PC-9 (cell line): ENCODE measurements at regions of chr20 and their contacts with region 1.

Region 1: DNA sequence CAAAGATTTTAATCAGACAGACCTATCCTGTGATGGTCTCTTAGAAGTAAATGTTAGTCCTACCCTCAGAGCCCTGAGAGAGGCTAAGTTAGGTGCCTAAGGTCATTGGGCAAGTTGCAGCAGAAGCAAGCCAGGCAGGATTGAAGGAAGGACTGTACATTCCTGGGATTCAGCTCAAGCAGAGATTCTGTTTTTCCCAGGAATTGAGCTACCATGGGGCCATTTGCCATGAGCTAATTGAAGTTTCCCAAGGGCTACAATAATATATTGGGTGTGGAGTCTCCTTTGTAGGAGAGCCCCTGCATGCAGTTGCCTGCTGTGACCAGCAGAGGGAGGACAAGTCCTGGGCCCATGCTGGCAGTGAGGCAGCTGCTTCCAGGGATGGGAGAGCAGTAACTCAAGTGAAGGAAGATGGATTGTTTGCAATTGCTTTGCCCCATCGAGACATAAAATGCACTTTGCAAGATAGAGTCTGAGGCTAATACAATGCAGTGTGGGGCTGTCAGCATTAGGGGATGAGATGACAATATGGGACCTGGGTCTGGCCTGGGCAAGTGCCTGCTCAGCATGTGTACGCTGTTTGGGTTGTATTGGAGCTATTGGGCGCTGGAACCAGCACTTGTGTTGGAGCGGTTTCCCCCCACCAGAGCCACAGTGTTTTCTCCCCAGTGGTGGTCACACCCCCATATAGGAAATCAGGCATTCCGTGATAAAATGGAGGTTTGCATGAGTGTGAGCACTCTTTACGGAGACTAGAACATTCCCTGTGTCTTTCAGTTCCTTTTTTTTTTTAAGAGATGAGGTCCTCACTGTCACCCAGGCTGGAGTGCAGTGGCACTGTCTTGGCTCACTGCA is 27.9 kb downstream of the DNMT3B start:
- DNase-seq: peak in 1 of 2 experiments; percentile 67
- H3K4me3 ChIP-seq: no peak overlapping the region
- H3K27ac ChIP-seq: no peak overlapping the region
- H3K4me1 ChIP-seq: no peaks in the 10 kb centered on the region
- H3K27me3 ChIP-seq: no peaks in the 10 kb centered on the region
- CTCF ChIP-seq: peak; percentile 99

Region 2: DNA sequence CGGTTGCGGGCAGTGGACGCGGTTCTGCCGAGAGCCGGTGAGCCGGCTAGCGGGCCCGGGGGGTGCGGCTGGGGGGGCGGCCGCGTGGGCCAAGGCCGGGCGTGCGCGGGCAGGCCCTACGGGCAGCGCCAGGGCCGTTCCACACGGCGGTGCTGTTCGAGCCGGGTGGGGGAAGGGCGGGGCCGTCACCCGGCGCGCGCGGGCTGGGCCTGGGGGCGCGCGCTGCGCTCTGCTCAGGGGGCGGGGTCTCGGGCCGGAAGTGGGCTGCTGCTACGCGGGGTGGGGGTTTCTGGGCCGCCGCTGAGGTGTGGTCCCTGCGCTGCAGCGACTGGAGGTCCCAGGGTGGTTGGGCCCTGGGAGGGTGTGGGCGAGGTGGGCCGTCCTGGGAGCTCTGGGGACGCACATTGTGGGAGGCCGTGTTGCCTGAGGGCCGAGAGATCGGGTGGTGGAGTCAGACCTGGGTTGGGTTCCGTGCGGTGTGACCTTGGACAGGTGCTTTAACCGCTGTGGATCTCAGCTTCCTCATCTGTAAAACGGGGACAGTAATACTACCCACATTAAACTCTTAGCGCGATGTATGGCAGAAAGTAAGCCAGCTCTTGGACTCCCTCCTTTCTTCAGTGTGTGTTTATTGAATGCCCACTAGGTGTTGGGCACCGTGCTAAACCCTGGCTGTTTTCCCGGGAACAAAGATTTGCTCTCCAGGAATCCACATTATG is 30.0 kb after region 1 on chr20:
- CTCF ChIA-PET with region 1: interaction called, 10 read pairs
- POLR2A ChIA-PET with region 1: interaction called, 3 read pairs
- intact Hi-C with region 1: no loop called
- DNase-seq: no peak
- H3K4me3 ChIP-seq: peak overlapping the region; percentile 76
- H3K27ac ChIP-seq: peak overlapping the region; percentile 50; the same call in 1 of the 2 replicates
- H3K4me1 ChIP-seq: peaks cover 34% of the 10 kb centered on the region
- H3K27me3 ChIP-seq: no peaks in the 10 kb centered on the region
- CTCF ChIP-seq: no peak

Region 3: GRCh38 chr20:33009214-33010132 is 219.3 kb after region 1 on chr20:
- CTCF ChIA-PET with region 1: no interaction called
- POLR2A ChIA-PET with region 1: no interaction called
- intact Hi-C with region 1: no loop called
- DNase-seq: no peak
- H3K4me3 ChIP-seq: no peak overlapping the region
- H3K27ac ChIP-seq: no peak overlapping the region
- H3K4me1 ChIP-seq: no peaks in the 10 kb centered on the region
- H3K27me3 ChIP-seq: peaks cover 89% of the 10 kb centered on the region
- CTCF ChIP-seq: no peak

Region 4: GRCh38 chr20:33031531-33031930 is 241.4 kb after region 1 on chr20 and contains the start of gene BPIFB6:
- CTCF ChIA-PET with region 1: no interaction called
- POLR2A ChIA-PET with region 1: no interaction called
- intact Hi-C with region 1: no loop called
- DNase-seq: no peak
- H3K4me3 ChIP-seq: no peak within 1 kb of the TSS
- H3K27ac ChIP-seq: no peak within 1 kb of the TSS
- H3K4me1 ChIP-seq: no peaks in the 10 kb centered on the region
- H3K27me3 ChIP-seq: peaks cover 96% of the 10 kb centered on the region
- CTCF ChIP-seq: no peak
- total RNA-seq, gene BPIFB6: not detected in 2 replicates

Region 5: GRCh38 chr20:33291830-33292355 is 501.8 kb after region 1 on chr20:
- CTCF ChIA-PET with region 1: no interaction called
- POLR2A ChIA-PET with region 1: no interaction called
- intact Hi-C with region 1: loop called (anchors 5 kb)
- DNase-seq: peak in 1 of 2 experiments; percentile 61
- H3K4me3 ChIP-seq: no peak overlapping the region
- H3K27ac ChIP-seq: no peak overlapping the region
- H3K4me1 ChIP-seq: no peaks in the 10 kb centered on the region
- H3K27me3 ChIP-seq: no peaks in the 10 kb centered on the region
- CTCF ChIP-seq: peak; percentile 99